K562 (cell line): ENCODE measurements at regions of chr20 and their contacts with region 1.

Region 1: GRCh38 chr20:49186535-49187329 is 1.4 kb downstream of the STAU1 start:
- DNase-seq: peak; percentile 43 to 85 (median 60)
- ATAC-seq: peak; percentile 59
- H3K4me3 ChIP-seq: peak overlapping the region; percentile 88
- H3K27ac ChIP-seq: peak overlapping the region; percentile 90
- H3K4me1 ChIP-seq: peaks cover 24 to 25% of the 10 kb centered on the region in 2 experiments
- H3K27me3 ChIP-seq: no peaks in the 10 kb centered on the region
- CTCF ChIP-seq: no peak; a peak in 1 of 6 replicates
- EP300 ChIP-seq: no peak
- POLR2A ChIP-seq: no peak
- RAD21 ChIP-seq: no peak

Region 2: GRCh38 chr20:48921151-48921898 is 265.4 kb before region 1 on chr20 and contains the start of gene ARFGEF2:
- CTCF ChIA-PET with region 1: no interaction called
- POLR2A ChIA-PET with region 1: no interaction called
- in situ Hi-C with region 1: no loop called
- intact Hi-C with region 1: loop called (anchors 5 kb)
- DNase-seq: peak; percentile 97
- ATAC-seq: peak; percentile 92
- H3K4me3 ChIP-seq: peak within 1 kb of the TSS; percentile 76
- H3K27ac ChIP-seq: peak within 1 kb of the TSS; percentile 89
- H3K4me1 ChIP-seq: peaks cover 25 to 34% of the 10 kb centered on the region in 2 experiments; a peak in 4 of 5 replicates
- H3K27me3 ChIP-seq: no peaks in the 10 kb centered on the region
- CTCF ChIP-seq: peak; percentile 12 to 23 (median 17); a peak in 2 of 6 replicates
- EP300 ChIP-seq: peak; percentile 28; the same call in 1 of the 2 replicates
- POLR2A ChIP-seq: peak; percentile 95
- RAD21 ChIP-seq: no peak
- polyA plus RNA-seq, gene ARFGEF2: 4.2 TPM

Region 3: DNA sequence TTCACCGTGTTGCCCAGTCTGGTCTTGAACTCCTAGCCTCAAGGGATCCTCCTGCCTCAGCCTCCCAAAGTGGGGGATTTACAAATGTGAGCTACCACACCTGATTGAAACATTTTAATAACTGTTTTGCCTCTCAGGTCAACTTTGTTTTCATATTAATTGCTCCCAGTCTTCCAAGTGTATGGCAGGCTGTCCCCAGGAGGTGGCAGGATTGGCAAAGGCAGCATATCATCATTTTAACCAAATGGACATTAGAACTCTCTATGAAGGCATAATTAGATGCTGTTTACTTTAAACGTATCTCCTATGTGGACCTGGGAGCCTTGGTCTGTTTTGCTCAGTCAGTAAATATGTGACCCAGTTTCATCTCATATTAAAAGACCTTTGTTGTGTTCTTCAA is 199.8 kb before region 1 on chr20:
- CTCF ChIA-PET with region 1: no interaction called
- POLR2A ChIA-PET with region 1: no interaction called
- in situ Hi-C with region 1: no loop called
- intact Hi-C with region 1: no loop called
- DNase-seq: peak in 2 of 4 experiments; percentile 17
- ATAC-seq: peak; percentile 60; the same call in 2 of the 3 replicates
- H3K4me3 ChIP-seq: no peak overlapping the region
- H3K27ac ChIP-seq: no peak overlapping the region
- H3K4me1 ChIP-seq: no peaks in the 10 kb centered on the region; a peak in 1 of 5 replicates
- H3K27me3 ChIP-seq: no peaks in the 10 kb centered on the region
- CTCF ChIP-seq: peak; percentile 25 to 50 (median 47); a peak in 5 of 6 replicates
- EP300 ChIP-seq: no peak
- POLR2A ChIP-seq: no peak
- RAD21 ChIP-seq: peak in 1 of 2 experiments; percentile 33; a peak in 1 of 4 replicates

Region 4: GRCh38 chr20:49278036-49278817 is 91.5 kb after region 1 on chr20 and contains the start of gene ZNFX1:
- CTCF ChIA-PET with region 1: interaction called, 3 read pairs
- POLR2A ChIA-PET with region 1: interaction called, 4 read pairs
- in situ Hi-C with region 1: no loop called
- intact Hi-C with region 1: loop called (anchors 5 kb)
- DNase-seq: peak; percentile 92 to 98 (median 95)
- ATAC-seq: peak; percentile 94
- H3K4me3 ChIP-seq: peak within 1 kb of the TSS; percentile 93
- H3K27ac ChIP-seq: peak within 1 kb of the TSS; percentile 95
- H3K4me1 ChIP-seq: peaks cover 13 to 19% of the 10 kb centered on the region in 2 experiments
- H3K27me3 ChIP-seq: no peaks in the 10 kb centered on the region
- CTCF ChIP-seq: peak in 2 of 3 experiments; percentile 25 to 29; a peak in 1 of 6 replicates
- EP300 ChIP-seq: no peak
- POLR2A ChIP-seq: peak; percentile 100
- RAD21 ChIP-seq: peak in 1 of 2 experiments; percentile 6; a peak in 1 of 4 replicates
- polyA plus RNA-seq, gene ZNFX1: 4.4 to 4.9 TPM

Region 5: GRCh38 chr20:49288784-49289696 is 102.3 kb after region 1 on chr20:
- CTCF ChIA-PET with region 1: no interaction called
- POLR2A ChIA-PET with region 1: no interaction called
- in situ Hi-C with region 1: no loop called
- intact Hi-C with region 1: no loop called
- DNase-seq: peak in 1 of 4 experiments; percentile 23
- ATAC-seq: no peak; the same call in 1 of the 3 replicates
- H3K4me3 ChIP-seq: no peak overlapping the region
- H3K27ac ChIP-seq: peak overlapping the region; percentile 44; the same call in 1 of the 3 replicates
- H3K4me1 ChIP-seq: peaks cover 7 to 34% of the 10 kb centered on the region in 2 experiments; a peak in 4 of 5 replicates
- H3K27me3 ChIP-seq: no peaks in the 10 kb centered on the region
- CTCF ChIP-seq: no peak
- EP300 ChIP-seq: no peak
- POLR2A ChIP-seq: peak; percentile 86; the same call in 1 of the 2 replicates
- RAD21 ChIP-seq: no peak

Region 6: GRCh38 chr20:49562311-49563014 is 375.7 kb after region 1 on chr20:
- CTCF ChIA-PET with region 1: no interaction called
- POLR2A ChIA-PET with region 1: no interaction called
- in situ Hi-C with region 1: no loop called
- intact Hi-C with region 1: no loop called
- DNase-seq: peak; percentile 34 to 46 (median 44)
- ATAC-seq: peak; percentile 53; the same call in 2 of the 3 replicates
- H3K4me3 ChIP-seq: no peak overlapping the region
- H3K27ac ChIP-seq: no peak overlapping the region
- H3K4me1 ChIP-seq: peaks cover 4 to 7% of the 10 kb centered on the region in 2 experiments
- H3K27me3 ChIP-seq: peaks cover 14 to 50% of the 10 kb centered on the region in 2 experiments; a peak in 3 of 5 replicates
- CTCF ChIP-seq: no peak
- EP300 ChIP-seq: no peak
- POLR2A ChIP-seq: no peak
- RAD21 ChIP-seq: no peak

Region 7: DNA sequence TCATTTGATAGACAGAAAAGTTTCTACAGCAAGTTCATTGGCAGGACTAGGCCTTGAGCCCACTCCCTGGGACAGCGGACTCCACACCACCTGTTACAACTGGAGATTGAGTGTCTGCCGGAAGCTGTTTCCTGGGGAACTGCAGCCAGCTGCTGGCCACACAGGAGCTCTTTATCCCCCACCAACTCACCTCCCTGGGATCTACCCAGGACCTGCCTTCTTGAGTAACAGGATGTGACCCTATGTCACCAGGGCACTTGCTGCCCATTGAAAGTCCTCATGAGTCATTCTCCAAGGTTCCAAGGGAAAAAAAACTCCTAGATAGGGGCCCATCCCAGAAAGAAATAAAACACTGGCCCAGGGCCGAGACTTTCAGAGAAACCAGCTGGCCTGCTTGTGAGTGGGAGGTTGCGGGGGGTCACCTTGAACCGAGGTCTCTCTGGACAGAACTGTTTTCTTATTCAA is 588.5 kb after region 1 on chr20:
- CTCF ChIA-PET with region 1: no interaction called
- POLR2A ChIA-PET with region 1: no interaction called
- in situ Hi-C with region 1: no loop called
- intact Hi-C with region 1: no loop called
- DNase-seq: peak; percentile 50 to 72 (median 58)
- ATAC-seq: peak; percentile 59
- H3K4me3 ChIP-seq: no peak overlapping the region
- H3K27ac ChIP-seq: peak overlapping the region; percentile 64; the same call in 2 of the 3 replicates
- H3K4me1 ChIP-seq: peaks cover 18 to 26% of the 10 kb centered on the region in 2 experiments
- H3K27me3 ChIP-seq: no peaks in the 10 kb centered on the region
- CTCF ChIP-seq: no peak
- EP300 ChIP-seq: no peak
- POLR2A ChIP-seq: no peak
- RAD21 ChIP-seq: peak in 1 of 2 experiments; percentile 19; a peak in 1 of 4 replicates